Mammary epithelial cell (primary cell): ENCODE measurements at regions of chrX and their contacts with region 1.

Region 1: GRCh38 chrX:46325312-46325877 is 219.8 kb downstream of the ZNF674 start:
- DNase-seq: peak; percentile 92
- H3K4me3 ChIP-seq: no peak overlapping the region
- H3K27ac ChIP-seq: peak overlapping the region; percentile 98
- H3K4me1 ChIP-seq: peaks cover 42% of the 10 kb centered on the region
- H3K27me3 ChIP-seq: no peaks in the 10 kb centered on the region
- CTCF ChIP-seq: no peak

Region 2: DNA sequence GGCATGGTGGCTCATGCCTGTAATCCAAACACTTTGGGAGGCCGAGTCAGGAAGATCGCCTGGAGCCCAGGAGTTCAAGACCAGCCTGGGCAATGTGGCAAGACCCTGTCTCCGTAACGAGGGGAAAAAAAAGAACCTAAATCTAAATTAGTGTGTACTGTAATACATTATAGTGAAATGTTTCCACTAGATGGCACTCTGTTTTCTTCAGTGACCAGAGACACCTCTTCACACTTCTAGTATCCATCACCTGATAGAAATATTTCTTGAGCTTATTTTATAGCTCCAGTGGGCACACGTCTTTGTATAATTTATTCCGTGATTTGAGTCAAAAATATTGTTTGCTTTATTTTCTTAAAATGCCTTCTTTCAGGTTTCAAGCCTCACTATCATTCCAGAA is 523.8 kb before region 1 on chrX:
- CTCF ChIA-PET with region 1: no interaction called
- dilution Hi-C with region 1: no loop called
- in situ Hi-C with region 1: no loop called
- intact Hi-C with region 1: loop called (anchors 2 kb)
- DNase-seq: peak; percentile 50
- H3K4me3 ChIP-seq: peak overlapping the region in 1 of 3 experiments; percentile 40
- H3K27ac ChIP-seq: peak overlapping the region; percentile 91
- H3K4me1 ChIP-seq: peaks cover 48% of the 10 kb centered on the region
- H3K27me3 ChIP-seq: no peaks in the 10 kb centered on the region
- CTCF ChIP-seq: peak; percentile 39 to 52

Region 3: GRCh38 chrX:46130247-46130646 is 195.1 kb before region 1 on chrX:
- CTCF ChIA-PET with region 1: no interaction called
- dilution Hi-C with region 1: no loop called
- in situ Hi-C with region 1: no loop called
- intact Hi-C with region 1: no loop called
- DNase-seq: no peak
- H3K4me3 ChIP-seq: no peak overlapping the region
- H3K27ac ChIP-seq: no peak overlapping the region
- H3K4me1 ChIP-seq: no peaks in the 10 kb centered on the region
- H3K27me3 ChIP-seq: peaks cover 3% of the 10 kb centered on the region
- CTCF ChIP-seq: no peak

Region 4: DNA sequence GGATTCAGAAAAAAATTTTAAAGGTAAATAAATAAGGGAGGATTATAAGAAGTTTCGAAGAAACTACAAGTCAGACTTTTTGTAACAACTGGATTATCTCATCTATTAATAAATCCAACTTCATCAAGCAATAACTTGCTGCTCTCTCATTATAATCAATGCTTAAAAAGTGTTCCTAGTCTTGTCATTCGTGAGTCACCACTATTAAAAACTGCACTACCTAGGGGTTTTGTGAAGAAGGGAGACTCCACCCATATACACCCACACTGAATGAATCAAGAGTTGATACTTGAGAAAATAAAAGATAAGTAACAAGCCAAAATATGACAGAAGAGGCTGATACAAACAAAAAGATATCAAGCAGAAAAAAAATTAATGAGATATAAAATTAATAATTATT is 140.6 kb before region 1 on chrX:
- CTCF ChIA-PET with region 1: no interaction called
- dilution Hi-C with region 1: no loop called
- in situ Hi-C with region 1: no loop called
- intact Hi-C with region 1: loop called (anchors 2 kb)
- DNase-seq: peak; percentile 87
- H3K4me3 ChIP-seq: no peak overlapping the region
- H3K27ac ChIP-seq: peak overlapping the region; percentile 75
- H3K4me1 ChIP-seq: peaks cover 48% of the 10 kb centered on the region
- H3K27me3 ChIP-seq: no peaks in the 10 kb centered on the region
- CTCF ChIP-seq: no peak

Region 5: DNA sequence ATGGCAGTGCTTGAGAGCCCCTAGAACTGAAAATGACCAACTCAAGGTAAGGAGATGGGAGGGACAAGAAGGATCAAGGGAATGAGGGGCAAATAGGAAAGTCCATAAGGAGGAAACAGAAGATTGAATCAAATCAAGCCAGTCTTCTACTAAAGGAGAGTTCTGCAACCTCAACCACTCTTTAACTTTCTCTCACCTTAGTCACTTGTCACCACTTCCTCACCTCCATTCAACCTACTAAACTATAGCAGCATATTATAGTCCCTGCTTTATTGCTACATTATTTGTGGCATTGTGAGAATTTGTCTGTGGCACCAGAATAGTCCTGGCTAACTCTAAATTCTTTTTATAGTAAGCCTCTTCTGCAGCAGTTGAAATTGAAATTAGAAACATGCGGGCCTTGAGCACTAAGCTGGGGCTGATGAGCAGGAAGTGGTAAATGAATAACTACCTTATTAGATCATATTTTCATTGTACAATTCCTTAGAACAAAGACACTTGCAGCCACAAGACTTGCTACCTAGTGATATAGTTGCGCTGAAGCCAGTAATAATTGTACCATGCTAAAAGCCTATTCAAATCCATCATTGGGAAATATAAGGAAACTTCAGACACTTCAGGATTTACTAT is 117.1 kb before region 1 on chrX:
- CTCF ChIA-PET with region 1: no interaction called
- dilution Hi-C with region 1: no loop called
- in situ Hi-C with region 1: no loop called
- intact Hi-C with region 1: loop called (anchors 2 kb)
- DNase-seq: peak; percentile 65
- H3K4me3 ChIP-seq: no peak overlapping the region
- H3K27ac ChIP-seq: peak overlapping the region; percentile 50
- H3K4me1 ChIP-seq: peaks cover 41% of the 10 kb centered on the region
- H3K27me3 ChIP-seq: no peaks in the 10 kb centered on the region
- CTCF ChIP-seq: no peak

Region 6: DNA sequence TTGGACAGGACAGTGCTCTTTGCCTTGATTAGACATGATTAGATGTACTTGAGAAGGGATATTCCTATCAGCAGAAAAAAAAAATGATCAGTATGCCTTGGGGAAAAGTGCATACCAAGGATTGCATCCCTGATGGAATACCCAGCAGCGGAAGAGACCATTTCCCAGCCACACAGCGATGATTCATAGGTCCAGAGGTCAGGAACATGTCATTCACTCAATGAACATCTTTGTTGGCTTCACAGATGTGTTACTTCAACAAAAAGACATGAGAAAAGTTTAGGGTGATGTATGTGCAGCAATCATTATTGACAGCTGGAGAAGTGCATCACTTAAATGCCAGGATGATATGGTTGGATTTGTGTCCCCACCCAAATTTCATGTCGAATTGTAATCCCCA is 73.6 kb before region 1 on chrX:
- CTCF ChIA-PET with region 1: no interaction called
- dilution Hi-C with region 1: loop called (anchors 5 kb)
- in situ Hi-C with region 1: no loop called
- intact Hi-C with region 1: no loop called
- DNase-seq: peak; percentile 66
- H3K4me3 ChIP-seq: no peak overlapping the region
- H3K27ac ChIP-seq: no peak overlapping the region
- H3K4me1 ChIP-seq: peaks cover 32% of the 10 kb centered on the region
- H3K27me3 ChIP-seq: no peaks in the 10 kb centered on the region
- CTCF ChIP-seq: no peak

Region 7: GRCh38 chrX:46260513-46260912 is 64.9 kb before region 1 on chrX:
- CTCF ChIA-PET with region 1: no interaction called
- dilution Hi-C with region 1: no loop called
- in situ Hi-C with region 1: no loop called
- intact Hi-C with region 1: loop called (anchors 1 kb)
- DNase-seq: peak; percentile 97
- H3K4me3 ChIP-seq: no peak overlapping the region
- H3K27ac ChIP-seq: peak overlapping the region; percentile 98
- H3K4me1 ChIP-seq: peaks cover 60% of the 10 kb centered on the region
- H3K27me3 ChIP-seq: no peaks in the 10 kb centered on the region
- CTCF ChIP-seq: peak in 1 of 2 donors; percentile 12

Region 8: DNA sequence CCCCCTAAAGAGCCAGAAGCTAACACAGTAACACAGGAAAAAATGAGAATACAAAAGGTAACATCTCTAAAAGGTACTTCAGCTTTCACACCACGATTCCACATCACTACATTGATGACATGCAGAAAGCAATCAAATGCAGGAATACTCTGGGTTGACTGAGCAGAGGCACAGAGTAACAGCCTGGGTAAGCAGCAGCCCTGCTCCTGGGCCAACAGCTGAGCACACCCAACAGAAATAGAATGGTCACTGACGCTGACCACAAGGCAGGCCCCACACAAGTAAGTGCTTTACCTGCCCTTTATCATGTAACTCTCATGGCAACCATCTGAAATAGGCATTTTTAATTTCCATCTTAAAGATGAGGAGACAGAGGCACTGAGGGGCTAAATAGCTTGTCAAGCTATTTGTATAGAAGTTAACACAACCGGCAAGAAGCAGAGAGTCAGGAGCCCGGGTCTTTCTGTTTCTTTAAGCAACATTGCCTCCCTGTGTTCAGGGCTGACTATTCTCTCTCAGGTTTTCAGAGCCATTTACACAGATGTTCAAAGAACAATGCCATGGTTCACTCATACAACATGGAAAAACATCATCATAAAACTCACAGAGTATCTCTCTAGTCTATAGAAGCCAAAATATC is 51.0 kb after region 1 on chrX:
- CTCF ChIA-PET with region 1: interaction called, 7 read pairs
- dilution Hi-C with region 1: no loop called
- in situ Hi-C with region 1: no loop called
- intact Hi-C with region 1: loop called (anchors 2 kb)
- DNase-seq: peak; percentile 61
- H3K4me3 ChIP-seq: no peak overlapping the region
- H3K27ac ChIP-seq: peak overlapping the region; percentile 7
- H3K4me1 ChIP-seq: peaks cover 20% of the 10 kb centered on the region
- H3K27me3 ChIP-seq: no peaks in the 10 kb centered on the region
- CTCF ChIP-seq: peak; percentile 50 to 61